PC-3 (cell line): ENCODE measurements at regions of chr16 and their contacts with region 1.

Region 1: DNA sequence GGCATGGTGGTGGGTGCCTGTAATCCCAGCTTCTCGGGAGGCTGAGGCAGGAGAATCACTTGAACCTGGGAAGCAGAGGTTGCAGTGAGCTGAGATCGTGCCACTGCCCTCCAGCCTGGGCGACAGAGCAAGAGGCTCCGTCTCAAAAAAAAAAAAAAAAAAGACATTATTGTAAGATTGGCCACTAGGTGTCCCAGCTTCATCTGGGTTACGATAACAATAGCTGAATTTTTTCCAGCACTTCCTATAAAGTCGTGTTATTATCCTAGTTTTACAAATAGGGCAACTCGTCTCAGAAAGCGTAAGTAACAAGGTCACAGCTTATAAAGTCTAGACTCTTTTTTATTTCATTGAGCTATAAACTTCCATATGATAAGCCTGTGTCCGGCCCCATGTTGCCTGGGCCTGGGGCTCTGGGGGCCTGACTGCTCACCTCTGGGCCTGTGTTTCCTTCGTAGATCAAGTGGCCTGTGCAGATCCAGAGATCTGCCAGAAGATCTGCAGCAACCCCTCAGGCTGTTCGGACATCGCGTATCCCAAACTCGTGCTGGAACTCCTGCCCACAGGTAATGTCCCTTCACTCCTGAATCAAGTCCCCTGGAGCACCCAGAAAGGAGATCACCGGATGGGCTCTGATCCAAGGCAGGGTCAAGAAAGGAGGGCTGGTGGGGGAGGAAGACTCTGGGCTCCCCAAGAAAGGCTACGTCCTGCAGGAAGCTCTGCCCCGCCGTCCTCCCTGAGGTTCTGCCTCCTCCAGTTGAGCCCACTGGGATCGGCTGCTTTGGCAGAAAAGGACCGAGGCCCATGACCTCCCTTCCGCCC is 60.6 kb downstream of the SLC5A11 start:
- DNase-seq: peak; percentile 41
- ATAC-seq: no peak
- H3K4me3 ChIP-seq: no peak overlapping the region
- H3K27ac ChIP-seq: no peak overlapping the region
- H3K4me1 ChIP-seq: no peaks in the 10 kb centered on the region
- H3K27me3 ChIP-seq: no peaks in the 10 kb centered on the region
- CTCF ChIP-seq: no peak; the same call in 1 of the 2 replicates

Region 2: GRCh38 chr16:24834459-24835335 is 71.7 kb before region 1 on chr16:
- CTCF ChIA-PET with region 1: no interaction called
- POLR2A ChIA-PET with region 1: no interaction called
- intact Hi-C with region 1: loop called (anchors 10 kb)
- DNase-seq: peak; percentile 63
- ATAC-seq: peak; percentile 93
- H3K4me3 ChIP-seq: no peak overlapping the region
- H3K27ac ChIP-seq: no peak overlapping the region
- H3K4me1 ChIP-seq: peaks cover 14% of the 10 kb centered on the region
- H3K27me3 ChIP-seq: no peaks in the 10 kb centered on the region
- CTCF ChIP-seq: peak; percentile 72

Region 3: GRCh38 chr16:25135254-25135878 is 229.0 kb after region 1 on chr16:
- CTCF ChIA-PET with region 1: interaction called, 10 read pairs
- POLR2A ChIA-PET with region 1: no interaction called
- intact Hi-C with region 1: no loop called
- DNase-seq: peak; percentile 78
- ATAC-seq: peak; percentile 98
- H3K4me3 ChIP-seq: no peak overlapping the region
- H3K27ac ChIP-seq: 0 out of 2 replicates have a peak overlapping the region, but pooled peaks have one; percentile 19
- H3K4me1 ChIP-seq: no peaks in the 10 kb centered on the region
- H3K27me3 ChIP-seq: no peaks in the 10 kb centered on the region
- CTCF ChIP-seq: peak; percentile 67